ENCODE measurements at regions of chr2 and their contacts with region 1.

Region 1: GRCh38 chr2:230987137-230988020 is 8.5 kb upstream of the SPATA3 start:
- DNase-seq: peak; percentile 79
- H3K4me3 Mint-ChIP-seq: peak overlapping the region; percentile 51
- H3K27ac Mint-ChIP-seq: no peak overlapping the region
- H3K4me1 Mint-ChIP-seq: peaks cover 27% of the 10 kb centered on the region
- H3K27me3 Mint-ChIP-seq: peaks cover 66% of the 10 kb centered on the region

Region 2: GRCh38 chr2:230824406-230824978 is 162.9 kb before region 1 on chr2:
- CTCF ChIA-PET with region 1: interaction called, 42 read pairs
- DNase-seq: peak; percentile 62
- H3K4me3 Mint-ChIP-seq: no peak overlapping the region
- H3K27ac Mint-ChIP-seq: peak overlapping the region; percentile 24
- H3K4me1 Mint-ChIP-seq: peaks cover 22% of the 10 kb centered on the region
- H3K27me3 Mint-ChIP-seq: peaks cover 46% of the 10 kb centered on the region

Region 3: DNA sequence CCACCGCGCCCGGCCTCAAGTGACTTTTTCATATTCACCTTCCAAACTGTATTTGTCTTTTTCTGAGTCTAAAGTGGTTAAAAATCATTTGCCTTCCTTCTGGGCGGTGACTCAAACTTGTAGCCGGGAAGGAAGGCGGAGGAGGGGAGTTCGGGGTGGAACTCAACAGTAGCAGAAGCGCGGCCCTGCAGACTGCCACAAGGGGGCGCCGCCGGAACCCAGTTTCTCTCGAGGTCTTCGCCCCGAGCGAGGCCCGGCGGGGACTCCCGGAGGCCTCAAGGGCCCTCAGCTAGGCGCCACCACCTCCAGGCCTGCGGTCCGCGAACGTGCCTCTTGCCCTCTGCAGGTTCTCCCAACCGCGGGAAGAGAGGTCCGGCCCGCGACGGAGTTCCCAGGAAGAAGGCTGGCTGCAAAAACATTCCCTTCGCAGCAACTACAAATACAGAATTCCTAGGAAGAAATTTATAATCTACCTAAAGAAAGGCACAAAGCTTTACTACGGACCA is 139.4 kb before region 1 on chr2:
- CTCF ChIA-PET with region 1: interaction called, 85 read pairs
- DNase-seq: peak; percentile 91
- H3K4me3 Mint-ChIP-seq: no peak overlapping the region
- H3K27ac Mint-ChIP-seq: no peak overlapping the region
- H3K4me1 Mint-ChIP-seq: peaks cover 2% of the 10 kb centered on the region
- H3K27me3 Mint-ChIP-seq: peaks cover 68% of the 10 kb centered on the region

Region 4: DNA sequence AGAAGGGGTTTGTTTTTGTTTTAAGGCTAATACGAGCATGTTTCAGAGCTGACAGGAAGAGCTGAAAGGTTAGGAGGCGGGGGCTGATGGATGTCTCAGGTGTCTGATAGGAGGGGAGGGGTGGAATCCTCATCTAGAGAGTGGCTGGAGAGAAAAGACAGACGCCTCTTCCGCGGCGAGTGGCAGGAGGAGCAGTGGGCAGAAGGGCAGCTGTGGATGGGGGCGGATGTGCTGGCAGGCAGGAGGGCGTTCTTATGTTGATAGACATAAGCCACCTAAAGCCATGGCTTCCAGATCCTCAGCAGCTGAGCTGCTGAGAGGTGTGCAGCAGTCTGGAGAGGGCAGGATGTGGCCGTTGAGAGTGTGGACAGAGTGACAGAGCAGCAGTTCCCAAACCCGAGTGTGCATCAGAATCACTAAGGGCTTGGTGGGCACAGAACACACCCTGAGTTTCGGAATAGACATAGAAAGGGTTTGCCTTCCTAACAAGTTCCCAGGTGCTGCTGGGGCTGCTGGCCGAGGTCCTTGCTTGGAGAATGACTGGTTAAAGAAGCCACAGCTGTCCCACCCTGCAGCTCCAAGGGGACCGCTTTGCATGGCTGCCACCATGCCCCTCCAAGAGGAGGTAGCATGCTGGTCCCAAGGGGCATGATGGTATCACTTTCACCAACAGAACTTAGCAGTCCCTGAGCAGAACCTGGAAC is 125.7 kb before region 1 on chr2:
- CTCF ChIA-PET with region 1: interaction called, 13 read pairs
- DNase-seq: peak; percentile 34
- H3K4me3 Mint-ChIP-seq: no peak overlapping the region
- H3K27ac Mint-ChIP-seq: no peak overlapping the region
- H3K4me1 Mint-ChIP-seq: peaks cover 38% of the 10 kb centered on the region
- H3K27me3 Mint-ChIP-seq: peaks cover 74% of the 10 kb centered on the region

Region 5: GRCh38 chr2:230902180-230902899 is 85.0 kb before region 1 on chr2:
- CTCF ChIA-PET with region 1: interaction called, 193 read pairs
- DNase-seq: peak; percentile 62
- H3K4me3 Mint-ChIP-seq: no peak overlapping the region
- H3K27ac Mint-ChIP-seq: no peak overlapping the region
- H3K4me1 Mint-ChIP-seq: peaks cover 23% of the 10 kb centered on the region
- H3K27me3 Mint-ChIP-seq: peaks cover 48% of the 10 kb centered on the region

Region 6: DNA sequence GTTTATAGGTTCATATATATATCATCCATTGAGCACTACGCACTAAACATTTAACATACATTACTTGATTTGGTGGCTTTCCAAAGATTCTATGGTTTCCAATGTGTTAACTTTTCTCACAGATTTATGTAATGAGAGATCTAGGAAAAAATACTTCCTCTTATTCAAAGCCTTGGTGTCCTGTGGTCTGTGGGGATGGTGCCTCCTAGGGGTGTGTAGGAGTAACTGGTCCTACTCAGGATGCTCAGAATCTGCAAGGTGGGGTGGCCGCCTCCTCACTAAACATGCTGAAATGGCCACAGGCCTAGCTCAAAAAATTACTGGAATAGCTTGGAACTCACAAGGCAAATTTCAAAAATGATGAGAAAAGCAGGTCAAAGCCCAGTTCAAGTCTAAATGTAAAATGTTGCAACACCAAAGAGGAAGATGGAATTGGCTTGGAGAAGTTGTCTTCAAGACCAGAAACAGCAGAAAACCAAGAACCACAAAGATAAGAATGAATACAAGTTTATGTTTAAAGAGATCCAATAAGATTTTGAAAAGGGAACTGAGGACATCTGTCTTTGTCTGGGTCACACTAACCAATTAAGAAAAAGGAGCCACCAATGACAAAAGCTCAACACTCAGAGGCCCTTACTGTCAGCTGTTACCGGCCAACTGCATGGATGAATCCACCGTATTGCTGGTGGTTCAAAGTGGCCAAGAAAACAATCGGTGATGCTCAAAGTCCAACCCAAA is 73.8 kb before region 1 on chr2:
- CTCF ChIA-PET with region 1: interaction called, 193 read pairs
- DNase-seq: peak; percentile 39
- H3K4me3 Mint-ChIP-seq: no peak overlapping the region
- H3K27ac Mint-ChIP-seq: no peak overlapping the region
- H3K4me1 Mint-ChIP-seq: peaks cover 10% of the 10 kb centered on the region
- H3K27me3 Mint-ChIP-seq: peaks cover 23% of the 10 kb centered on the region

Region 7: DNA sequence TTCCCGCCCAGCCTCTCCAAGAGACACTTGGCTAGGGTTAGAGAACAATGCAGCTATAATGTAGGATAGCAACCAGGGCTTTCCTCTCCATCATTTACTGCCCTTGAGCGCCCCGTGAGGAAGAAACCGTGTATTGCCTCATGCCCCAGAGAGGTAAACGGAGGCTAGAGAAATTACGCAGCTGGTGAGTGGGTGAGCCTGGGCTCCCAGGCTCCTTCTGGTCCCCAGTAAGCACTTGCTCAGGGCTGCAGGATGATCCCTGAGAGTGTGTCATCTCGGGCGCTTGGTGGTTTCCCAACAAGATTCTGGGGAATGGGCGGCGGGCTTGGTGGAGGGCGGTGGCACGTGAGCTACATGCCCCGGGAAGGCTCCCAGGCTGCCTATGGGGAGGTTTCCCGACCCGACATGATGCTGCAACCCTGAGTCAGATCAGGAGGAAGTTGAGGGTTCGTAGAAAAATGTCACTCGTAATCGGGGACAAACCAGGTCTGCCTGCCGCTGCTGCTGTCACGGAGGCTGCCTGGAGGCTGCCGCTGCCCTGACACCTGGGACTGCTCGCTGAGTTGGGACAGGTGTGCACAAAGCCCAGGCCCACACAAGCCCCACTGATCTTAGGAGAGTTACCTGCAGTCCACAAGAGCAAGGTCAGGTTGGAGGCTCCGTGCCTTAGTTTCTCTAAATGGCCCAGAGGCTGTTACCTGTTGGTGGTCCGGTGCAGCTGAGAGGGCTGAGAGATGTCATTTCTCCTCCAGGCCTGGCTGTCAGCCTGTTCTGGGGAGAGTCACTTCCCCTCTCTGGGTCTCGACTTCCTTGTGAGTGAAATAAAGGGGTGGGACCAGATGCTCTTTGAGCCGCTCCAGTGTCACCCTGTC is 62.7 kb before region 1 on chr2 and contains the start of gene GPR55:
- CTCF ChIA-PET with region 1: interaction called, 61 read pairs
- DNase-seq: peak; percentile 47
- H3K4me3 Mint-ChIP-seq: peak within 1 kb of the TSS; percentile 76
- H3K27ac Mint-ChIP-seq: peak within 1 kb of the TSS; percentile 88
- H3K4me1 Mint-ChIP-seq: peaks cover 44% of the 10 kb centered on the region
- H3K27me3 Mint-ChIP-seq: peaks cover 18% of the 10 kb centered on the region

Region 8: GRCh38 chr2:231642631-231643494 is 655.5 kb after region 1 on chr2:
- CTCF ChIA-PET with region 1: no interaction called
- DNase-seq: peak; percentile 72
- H3K4me3 Mint-ChIP-seq: peak overlapping the region; percentile 64
- H3K27ac Mint-ChIP-seq: peak overlapping the region; percentile 88
- H3K4me1 Mint-ChIP-seq: peaks cover 32% of the 10 kb centered on the region
- H3K27me3 Mint-ChIP-seq: peaks cover 25% of the 10 kb centered on the region

Measured in activated naive CD4-positive, alpha-beta T cell treated with anti-CD3 and anti-CD28 coated beads, Interleukin-2, amount 10 ng/mL, durations not matched to agents 7 days and 5 days (primary cell).